ENCODE measurements at regions of chr2 and their contacts with region 1.

Region 1: DNA sequence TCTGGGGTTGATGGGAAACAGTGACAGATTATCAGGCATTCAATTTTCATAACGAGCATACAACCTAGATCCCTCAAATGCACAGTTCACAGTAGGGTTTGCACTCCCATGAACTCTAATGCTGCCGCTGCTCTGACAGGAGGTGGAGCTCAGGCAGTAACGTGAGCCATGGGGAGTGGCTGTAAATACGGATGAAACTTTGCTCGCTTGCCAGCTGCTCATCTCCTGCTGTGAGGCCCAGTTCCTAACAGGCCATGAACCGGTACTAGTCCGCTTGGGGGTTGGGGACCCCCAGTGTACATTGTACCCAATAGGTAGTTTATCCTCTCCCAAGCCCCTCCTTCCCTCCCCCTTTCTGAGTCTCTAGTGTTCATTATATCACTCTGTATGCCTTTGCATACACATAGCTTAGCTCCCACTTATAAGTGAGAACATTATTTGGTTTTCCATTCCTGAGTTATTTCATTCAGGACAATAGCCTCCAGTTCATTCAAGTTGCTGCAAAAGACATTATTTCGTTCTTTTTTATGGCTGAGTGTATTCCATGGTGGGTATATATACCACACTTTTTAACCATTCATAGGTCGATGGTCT is 94.7 kb downstream of the PTH2R start:
- DNase-seq: no peak
- CTCF ChIP-seq: no peak

Region 2: DNA sequence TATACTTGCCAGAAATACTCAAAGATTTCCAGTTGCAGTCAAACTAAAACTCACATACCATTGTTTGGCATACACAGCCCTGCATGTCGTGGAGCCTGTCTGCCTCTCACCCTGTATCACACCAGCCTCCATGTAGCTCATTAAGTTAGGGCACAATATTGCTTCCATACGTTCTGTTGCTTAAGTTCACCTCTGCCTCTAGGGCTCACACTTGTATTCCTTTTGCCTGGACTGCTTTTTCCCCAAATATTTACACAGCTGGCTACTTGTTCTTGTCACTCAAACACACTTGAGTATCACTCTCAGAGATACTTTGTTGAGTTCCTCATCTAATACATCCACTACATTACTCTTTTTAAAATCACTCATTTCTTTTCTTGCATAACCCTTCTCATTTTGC is 11.6 kb before region 1 on chr2:
- CTCF ChIA-PET with region 1: interaction called, 18 read pairs
- POLR2A ChIA-PET with region 1: no interaction called
- DNase-seq: no peak
- CTCF ChIP-seq: no peak